ENCODE measurements at regions of chr11 and their contacts with region 1.

Region 1: GRCh38 chr11:65194564-65194963 is 12.8 kb downstream of the CAPN1 start:
- DNase-seq: no peak
- H3K4me3 ChIP-seq: no peak overlapping the region
- CTCF ChIP-seq: no peak

Region 2: DNA sequence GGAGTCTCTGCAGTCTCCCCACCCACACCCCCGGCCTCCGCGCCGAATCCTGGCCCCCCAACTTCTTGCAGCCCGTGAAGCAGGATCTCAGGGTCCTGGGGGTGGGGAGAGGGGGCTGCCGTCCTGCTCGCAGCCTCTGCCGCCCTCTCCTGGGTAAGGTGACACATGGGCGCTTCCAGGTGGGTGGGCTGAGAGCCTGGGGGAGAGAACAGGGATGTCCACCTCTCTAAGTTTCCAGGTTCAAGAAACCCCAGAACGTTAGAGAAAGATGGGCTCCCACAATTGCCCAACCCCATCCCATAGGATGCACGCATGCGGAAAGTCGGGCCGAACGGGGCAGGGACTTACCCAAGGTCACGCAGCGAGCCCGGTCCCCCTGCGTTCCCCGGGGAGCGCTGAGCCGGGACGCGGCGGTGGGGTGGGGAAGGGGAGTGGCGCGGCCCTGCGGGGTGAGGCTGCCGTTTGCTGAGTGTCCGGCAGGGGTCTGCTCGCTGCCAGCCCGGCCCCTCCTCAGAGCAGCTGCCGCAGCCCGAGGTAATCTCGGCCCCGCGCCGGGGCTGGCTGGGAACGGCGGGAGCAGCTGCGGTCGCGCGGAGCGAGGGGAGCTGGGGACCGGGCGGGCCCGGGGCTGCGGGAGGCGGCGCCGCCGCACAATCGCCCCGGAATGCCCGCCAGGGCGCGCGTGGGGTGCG is 13.5 kb before region 1 on chr11:
- CTCF ChIA-PET with region 1: interaction called, 10 read pairs
- POLR2A ChIA-PET with region 1: interaction called, 3 read pairs
- DNase-seq: no peak
- H3K4me3 ChIP-seq: peak overlapping the region; percentile 86
- CTCF ChIP-seq: peak; percentile 76

Region 3: GRCh38 chr11:65204646-65205601 is 10.4 kb after region 1 on chr11:
- CTCF ChIA-PET with region 1: interaction called, 24 read pairs
- POLR2A ChIA-PET with region 1: no interaction called
- DNase-seq: no peak
- H3K4me3 ChIP-seq: no peak overlapping the region
- CTCF ChIP-seq: peak; percentile 88

Region 4: GRCh38 chr11:65243773-65244172 is 49.2 kb after region 1 on chr11:
- CTCF ChIA-PET with region 1: no interaction called
- POLR2A ChIA-PET with region 1: no interaction called
- DNase-seq: no peak
- H3K4me3 ChIP-seq: no peak overlapping the region
- CTCF ChIP-seq: no peak